ENCODE measurements at regions of chr17 and their contacts with region 1.

Region 1: DNA sequence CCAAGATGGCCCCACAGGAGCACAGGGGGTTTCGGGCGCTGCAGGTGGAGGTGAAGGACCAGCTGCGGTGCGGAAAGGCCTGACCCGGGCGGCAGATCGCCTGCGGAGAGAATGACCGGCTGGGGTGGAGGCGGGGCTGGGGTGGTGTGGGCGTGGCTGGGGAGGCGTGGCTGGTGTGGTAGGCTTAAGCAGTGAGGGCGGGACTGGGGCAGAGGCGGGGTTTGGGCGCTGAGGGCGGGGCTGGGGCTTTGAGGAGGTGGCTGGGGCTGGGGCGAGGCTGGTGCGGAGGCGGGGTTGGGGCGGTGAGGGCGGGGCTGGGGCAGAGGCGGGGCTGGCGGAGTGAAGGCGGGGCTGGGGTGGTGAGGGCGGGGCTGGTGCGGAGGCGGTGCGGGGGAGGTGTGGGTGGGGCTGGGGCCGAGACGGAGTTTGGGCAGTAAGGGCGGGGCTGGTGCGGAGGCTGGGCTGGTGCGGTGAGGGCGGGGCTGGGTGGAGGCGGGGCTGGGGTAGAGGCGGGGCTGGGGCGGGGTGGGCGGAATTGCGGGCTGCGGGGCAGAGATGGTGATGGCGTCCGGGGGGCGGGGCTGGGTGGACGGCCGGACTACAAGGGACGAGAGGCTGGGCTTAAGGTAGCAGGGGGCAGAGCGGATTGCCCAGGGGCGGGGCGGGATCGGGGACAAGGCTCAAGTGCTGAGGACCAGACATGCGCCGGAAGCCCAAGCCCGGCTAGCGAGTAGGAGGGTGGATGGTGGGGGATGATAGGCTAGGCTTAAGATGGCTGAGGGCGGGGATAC is 9.9 kb upstream of the GSDMA start:
- DNase-seq: peak; percentile 98
- H3K4me3 Mint-ChIP-seq: peak overlapping the region; percentile 76
- H3K27ac Mint-ChIP-seq: peak overlapping the region; percentile 73
- H3K4me1 Mint-ChIP-seq: peaks cover 6% of the 10 kb centered on the region
- H3K27me3 Mint-ChIP-seq: no peaks in the 10 kb centered on the region

Region 2: GRCh38 chr17:39848600-39848999 is 104.3 kb before region 1 on chr17:
- CTCF ChIA-PET with region 1: no interaction called
- POLR2A ChIA-PET with region 1: no interaction called
- intact Hi-C with region 1: no loop called
- DNase-seq: no peak
- H3K4me3 Mint-ChIP-seq: no peak overlapping the region
- H3K27ac Mint-ChIP-seq: no peak overlapping the region
- H3K4me1 Mint-ChIP-seq: peaks cover 65% of the 10 kb centered on the region
- H3K27me3 Mint-ChIP-seq: no peaks in the 10 kb centered on the region

Region 3: GRCh38 chr17:39927101-39927928 is 25.6 kb before region 1 on chr17 and contains the starts of genes LRRC3C and ORMDL3:
- CTCF ChIA-PET with region 1: interaction called, 8 read pairs
- POLR2A ChIA-PET with region 1: no interaction called
- intact Hi-C with region 1: loop called (anchors 2 kb)
- DNase-seq: peak; percentile 95
- H3K4me3 Mint-ChIP-seq: peak within 1 kb of the TSS; percentile 85
- H3K27ac Mint-ChIP-seq: peak within 1 kb of the TSS; percentile 90
- H3K4me1 Mint-ChIP-seq: peaks cover 52% of the 10 kb centered on the region
- H3K27me3 Mint-ChIP-seq: no peaks in the 10 kb centered on the region
- total RNA-seq, gene LRRC3C: not detected
- total RNA-seq, gene ORMDL3: 53.7 to 58.3 TPM

Region 4: DNA sequence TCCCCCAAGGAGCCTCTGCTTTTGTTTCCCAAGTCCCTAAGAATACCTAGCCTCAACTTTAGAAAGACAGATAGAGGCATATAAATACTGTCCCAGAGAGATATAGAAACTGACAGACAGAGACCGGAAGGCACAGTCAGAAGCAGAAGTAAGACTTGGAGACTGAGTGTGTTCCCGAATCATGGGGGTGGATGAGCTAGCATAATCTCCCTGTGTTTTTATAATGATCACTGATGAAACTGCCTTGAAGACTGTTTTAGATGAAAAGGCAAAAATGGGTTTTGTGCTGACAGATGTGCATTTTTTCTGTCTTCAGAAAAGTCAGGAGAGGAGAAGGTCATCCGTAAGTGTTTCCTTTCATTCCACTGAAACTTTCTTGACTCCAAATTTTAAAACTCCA is 19.4 kb after region 1 on chr17:
- CTCF ChIA-PET with region 1: interaction called, 77 read pairs
- POLR2A ChIA-PET with region 1: no interaction called
- intact Hi-C with region 1: no loop called
- DNase-seq: peak; percentile 25
- H3K4me3 Mint-ChIP-seq: no peak overlapping the region
- H3K27ac Mint-ChIP-seq: peak overlapping the region; percentile 19
- H3K4me1 Mint-ChIP-seq: peaks cover 11% of the 10 kb centered on the region
- H3K27me3 Mint-ChIP-seq: peaks cover 16% of the 10 kb centered on the region

Measured in activated CD4-positive, alpha-beta memory T cell treated with anti-CD3 and anti-CD28 coated beads for 36 hours (primary cell).